ENCODE measurements at regions of chr10 and their contacts with region 1.

Region 1: DNA sequence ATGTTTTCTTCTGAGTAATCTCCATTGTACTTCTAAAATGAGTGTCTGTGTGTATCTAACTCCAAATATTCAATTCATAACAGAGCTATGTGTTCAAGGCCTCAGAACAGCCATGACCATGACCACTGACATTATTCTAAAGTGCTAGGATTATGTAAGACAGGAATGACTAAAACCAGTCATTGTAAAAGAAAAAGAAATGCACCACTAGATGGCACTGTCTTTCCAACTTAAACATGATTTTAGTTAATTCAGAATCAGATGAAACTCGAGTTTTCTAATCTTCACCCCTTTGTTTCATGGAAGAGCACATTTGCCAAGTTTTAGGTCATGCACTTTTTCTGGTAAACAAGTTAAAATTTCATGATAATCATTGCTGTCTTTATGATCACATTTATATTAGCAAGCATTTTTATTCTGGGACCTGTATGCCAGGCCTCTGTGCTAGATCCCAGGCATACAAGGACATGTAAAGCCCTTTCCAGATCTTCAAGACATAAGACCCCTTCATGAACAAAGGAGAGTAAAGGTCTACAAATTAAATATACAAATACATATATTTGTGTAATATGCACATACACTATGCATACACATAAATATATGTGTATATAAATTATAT is 26.1 kb upstream of the RSU1 start:
- DNase-seq: no peak
- ATAC-seq: peak; percentile 81
- H3K4me3 ChIP-seq: no peak overlapping the region
- H3K27ac ChIP-seq: no peak overlapping the region
- H3K4me1 ChIP-seq: no peaks in the 10 kb centered on the region
- H3K27me3 ChIP-seq: no peaks in the 10 kb centered on the region

Region 2: GRCh38 chr10:16944402-16944801 is 101.0 kb after region 1 on chr10:
- intact Hi-C with region 1: loop called in 1 of 2 experiments (anchors 5 kb)
- DNase-seq: no peak
- ATAC-seq: peak; percentile 79
- H3K4me3 ChIP-seq: no peak overlapping the region
- H3K27ac ChIP-seq: peak overlapping the region; percentile 37 to 59
- H3K4me1 ChIP-seq: peaks cover 0 to 3% of the 10 kb centered on the region in 2 donors
- H3K27me3 ChIP-seq: no peaks in the 10 kb centered on the region

Region 3: GRCh38 chr10:17228091-17228940 is 385.0 kb after region 1 on chr10 and contains the start of gene VIM:
- intact Hi-C with region 1: loop called in 1 of 2 experiments (anchors 5 kb)
- DNase-seq: peak; percentile 98
- ATAC-seq: peak; percentile 90
- H3K4me3 ChIP-seq: peak within 1 kb of the TSS; percentile 47 to 96
- H3K27ac ChIP-seq: peak within 1 kb of the TSS; percentile 91 to 95
- H3K4me1 ChIP-seq: peaks cover 0 to 2% of the 10 kb centered on the region in 2 donors
- H3K27me3 ChIP-seq: no peaks in the 10 kb centered on the region
- total RNA-seq, gene VIM: 3,936 to 5,947 TPM

Region 4: GRCh38 chr10:17257466-17258321 is 414.3 kb after region 1 on chr10:
- intact Hi-C with region 1: loop called (anchors 2 to 5 kb)
- DNase-seq: no peak
- ATAC-seq: peak; percentile 94
- H3K4me3 ChIP-seq: no peak overlapping the region
- H3K27ac ChIP-seq: no peak overlapping the region
- H3K4me1 ChIP-seq: no peaks in the 10 kb centered on the region
- H3K27me3 ChIP-seq: no peaks in the 10 kb centered on the region

Region 5: GRCh38 chr10:17430647-17431355 is 587.4 kb after region 1 on chr10:
- intact Hi-C with region 1: loop called (anchors 5 to 10 kb)
- DNase-seq: peak; percentile 79 to 88
- ATAC-seq: peak; percentile 78
- H3K4me3 ChIP-seq: no peak overlapping the region
- H3K27ac ChIP-seq: no peak overlapping the region
- H3K4me1 ChIP-seq: no peaks in the 10 kb centered on the region
- H3K27me3 ChIP-seq: no peaks in the 10 kb centered on the region